GM18951 (cell line): ENCODE measurements at regions of chr2 and their contacts with region 1.

Region 1: DNA sequence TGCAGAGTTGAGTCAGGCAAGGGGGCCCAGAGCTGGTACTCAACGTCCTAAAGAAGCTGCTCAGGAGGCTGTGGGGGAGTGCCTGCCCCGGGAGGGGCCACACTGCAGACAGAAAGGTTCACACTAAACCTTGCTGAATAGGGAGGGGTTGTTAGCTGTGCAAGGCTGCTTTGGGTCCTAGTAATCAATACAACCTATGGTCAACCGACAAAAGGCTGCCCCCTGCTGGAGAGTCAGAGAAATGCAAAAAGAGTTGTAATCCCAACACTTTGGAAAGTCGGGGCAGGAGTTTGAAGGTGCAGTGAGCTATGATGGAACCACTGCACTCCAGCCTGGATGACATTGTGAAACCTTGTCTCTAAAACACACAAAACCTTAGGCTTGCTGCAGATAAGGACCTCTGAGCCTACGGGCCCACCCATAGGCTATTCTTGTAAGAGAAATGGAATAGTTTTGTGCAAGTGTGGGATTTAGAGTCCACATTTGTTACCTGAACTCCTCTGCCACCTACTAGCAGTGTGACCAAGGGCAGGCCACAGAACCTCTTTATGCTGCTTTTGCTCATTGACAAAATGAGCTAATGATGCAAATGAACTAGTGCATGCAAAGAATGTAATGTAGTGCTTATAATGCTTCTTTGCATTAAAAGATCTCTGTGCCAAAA is 81.5 kb downstream of the PRPF40A start:
- POLR2A ChIP-seq: no peak

Region 2: DNA sequence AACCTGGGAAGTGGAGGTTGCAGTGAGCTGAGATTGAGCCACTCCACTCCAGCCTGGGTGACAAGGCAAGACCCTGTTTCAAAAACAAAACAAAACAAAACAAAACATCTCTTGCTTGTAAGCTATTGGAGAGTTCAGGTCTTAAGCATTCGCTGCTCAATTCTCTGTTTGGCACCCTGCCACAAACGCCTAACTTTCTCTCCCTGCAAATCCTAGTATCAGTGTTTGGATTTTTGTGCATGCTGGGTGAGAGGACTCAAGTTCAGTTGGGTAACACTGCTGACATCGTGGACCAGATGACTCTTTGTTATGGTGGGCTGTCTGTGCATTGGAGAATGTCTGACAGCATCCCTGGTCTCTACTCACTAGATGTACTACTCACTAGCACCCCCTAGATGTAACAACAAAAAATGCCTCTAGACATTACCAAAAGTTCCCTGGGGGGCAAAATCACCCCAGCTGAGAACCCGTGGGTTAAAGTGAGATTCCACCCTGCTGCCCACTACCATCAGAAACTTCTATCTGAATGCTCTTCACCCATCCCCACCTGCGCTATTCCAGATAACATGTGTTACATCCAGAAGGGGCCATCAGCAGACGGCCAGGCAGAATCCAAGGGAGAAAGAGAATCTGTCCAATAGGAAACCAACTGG is 587.8 kb before region 1 on chr2:
- in situ Hi-C with region 1: loop called (anchors 10 kb)
- POLR2A ChIP-seq: no peak

Region 3: DNA sequence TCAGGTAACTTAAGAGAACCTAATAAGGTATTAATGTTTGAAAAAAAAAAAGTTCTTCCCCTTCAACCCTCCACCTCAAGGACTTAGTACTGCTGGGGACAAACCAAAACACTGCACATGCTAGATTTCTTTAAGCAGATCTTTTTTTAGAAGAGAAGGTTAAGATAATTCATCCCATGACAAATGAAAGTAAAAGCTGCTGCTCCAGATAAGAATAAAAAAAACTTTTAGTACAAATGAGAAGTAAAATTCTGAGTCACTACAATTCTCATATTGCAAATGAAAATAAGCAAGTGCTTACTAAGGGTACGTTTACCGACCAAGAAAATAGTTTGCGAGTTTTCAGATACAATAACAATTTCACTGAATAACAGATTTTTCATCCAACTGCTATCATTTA is 469.1 kb before region 1 on chr2:
- in situ Hi-C with region 1: no loop called
- POLR2A ChIP-seq: no peak

Region 4: GRCh38 chr2:152189622-152190495 is 445.9 kb before region 1 on chr2:
- in situ Hi-C with region 1: loop called (anchors 5 kb)
- POLR2A ChIP-seq: no peak

Region 5: DNA sequence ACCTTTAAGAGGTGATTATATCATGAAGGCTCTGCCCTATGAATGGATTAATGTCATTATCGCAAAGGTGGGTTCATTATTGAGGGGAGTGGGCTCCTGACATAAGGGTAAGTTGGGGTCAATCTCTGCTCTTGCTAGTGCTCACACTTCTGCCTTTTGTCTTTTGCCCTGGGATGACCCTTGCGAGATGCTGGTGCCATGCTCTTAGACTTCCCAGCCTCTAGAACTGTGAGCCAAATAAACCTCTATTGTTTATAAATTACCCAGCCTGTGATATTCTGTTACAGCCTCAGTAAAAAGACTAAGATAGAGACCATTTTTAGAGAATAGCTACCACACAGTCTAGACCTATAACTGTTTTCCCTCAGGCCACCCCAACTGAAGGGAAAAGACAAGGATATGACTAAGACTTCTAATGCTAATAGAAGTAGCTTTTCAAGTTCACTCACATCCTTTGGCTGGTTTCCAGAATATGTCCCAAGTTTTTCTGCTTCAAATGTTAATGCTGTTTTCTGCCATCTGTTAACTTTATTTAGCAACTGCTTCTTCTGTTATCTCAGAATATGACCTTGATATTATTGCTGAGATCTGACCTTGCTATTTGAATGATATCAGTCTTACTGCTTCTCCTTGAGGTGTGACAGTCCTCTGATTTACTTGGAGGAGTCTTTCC is 395.1 kb before region 1 on chr2:
- in situ Hi-C with region 1: no loop called
- POLR2A ChIP-seq: no peak

Region 6: GRCh38 chr2:152696476-152696875 is 60.7 kb after region 1 on chr2:
- in situ Hi-C with region 1: no loop called
- POLR2A ChIP-seq: no peak